ENCODE measurements at regions of chr20 and their contacts with region 1.

Region 1: GRCh38 chr20:23350196-23350903 is at the start of gene NXT1:
- DNase-seq: peak; percentile 98
- H3K4me3 ChIP-seq: peak within 1 kb of the TSS; percentile 88 to 89
- H3K27ac ChIP-seq: peak within 1 kb of the TSS; percentile 96 to 99
- H3K4me1 ChIP-seq: peaks cover 8% of the 10 kb centered on the region
- H3K27me3 ChIP-seq: no peaks in the 10 kb centered on the region
- CTCF ChIP-seq: peak in 2 of 4 experiments; percentile 10 to 14
- POLR2A ChIP-seq: peak; percentile 82
- total RNA-seq, gene NXT1: 39.2 to 59.8 TPM

Region 2: GRCh38 chr20:22333885-22334545 is 1016.3 kb before region 1 on chr20:
- intact Hi-C with region 1: loop called (anchors 10 kb)
- DNase-seq: peak; percentile 42
- H3K4me3 ChIP-seq: no peak overlapping the region
- H3K27ac ChIP-seq: no peak overlapping the region
- H3K4me1 ChIP-seq: no peaks in the 10 kb centered on the region
- H3K27me3 ChIP-seq: no peaks in the 10 kb centered on the region
- CTCF ChIP-seq: peak in 3 of 4 experiments; percentile 45 to 65 (median 55)
- POLR2A ChIP-seq: no peak

Region 3: GRCh38 chr20:23050847-23051631 is 299.3 kb before region 1 on chr20:
- intact Hi-C with region 1: loop called (anchors 10 kb)
- DNase-seq: peak; percentile 52
- H3K4me3 ChIP-seq: peak overlapping the region; percentile 24 to 28
- H3K27ac ChIP-seq: peak overlapping the region in 1 of 2 donors; percentile 27
- H3K4me1 ChIP-seq: no peaks in the 10 kb centered on the region
- H3K27me3 ChIP-seq: peaks cover 7% of the 10 kb centered on the region
- CTCF ChIP-seq: peak in 3 of 4 experiments; percentile 50 to 72 (median 52)
- POLR2A ChIP-seq: no peak

Region 4: GRCh38 chr20:23420943-23421931 is 70.9 kb after region 1 on chr20 and contains the start of gene NAPB:
- intact Hi-C with region 1: loop called (anchors 1 kb)
- DNase-seq: peak; percentile 93
- H3K4me3 ChIP-seq: peak within 1 kb of the TSS; percentile 83 to 86
- H3K27ac ChIP-seq: peak within 1 kb of the TSS; percentile 85 to 86
- H3K4me1 ChIP-seq: peaks cover 4% of the 10 kb centered on the region
- H3K27me3 ChIP-seq: no peaks in the 10 kb centered on the region
- CTCF ChIP-seq: peak; percentile 35 to 92 (median 62)
- POLR2A ChIP-seq: peak; percentile 95
- total RNA-seq, gene NAPB: 8.1 to 24.3 TPM

Region 5: GRCh38 chr20:23606652-23607049 is 256.3 kb after region 1 on chr20:
- intact Hi-C with region 1: loop called (anchors 5 kb)
- DNase-seq: peak; percentile 74
- H3K4me3 ChIP-seq: no peak overlapping the region
- H3K27ac ChIP-seq: no peak overlapping the region
- H3K4me1 ChIP-seq: no peaks in the 10 kb centered on the region
- H3K27me3 ChIP-seq: no peaks in the 10 kb centered on the region
- CTCF ChIP-seq: peak; percentile 63 to 91 (median 86)
- POLR2A ChIP-seq: no peak

Region 6: GRCh38 chr20:25057234-25058050 is 1707.1 kb after region 1 on chr20:
- intact Hi-C with region 1: loop called (anchors 10 kb)
- DNase-seq: peak; percentile 69
- H3K4me3 ChIP-seq: peak overlapping the region; percentile 77 to 87
- H3K27ac ChIP-seq: peak overlapping the region; percentile 85 to 93
- H3K4me1 ChIP-seq: peaks cover 17% of the 10 kb centered on the region
- H3K27me3 ChIP-seq: no peaks in the 10 kb centered on the region
- CTCF ChIP-seq: peak in 1 of 4 experiments; percentile 20
- POLR2A ChIP-seq: peak; percentile 35